ENCODE measurements at regions of chr12 and their contacts with region 1.

Region 1: GRCh38 chr12:93502802-93503623 is 35.7 kb downstream of the MRPL42 start:
- DNase-seq: peak; percentile 53
- H3K4me3 ChIP-seq: no peak overlapping the region
- H3K27ac ChIP-seq: no peak overlapping the region
- H3K4me1 ChIP-seq: no peaks in the 10 kb centered on the region
- CTCF ChIP-seq: peak; percentile 100

Region 2: GRCh38 chr12:93229494-93230325 is 273.3 kb before region 1 on chr12:
- CTCF ChIA-PET with region 1: no interaction called
- POLR2A ChIA-PET with region 1: no interaction called
- intact Hi-C with region 1: no loop called
- DNase-seq: no peak
- H3K4me3 ChIP-seq: no peak overlapping the region
- H3K27ac ChIP-seq: no peak overlapping the region
- H3K4me1 ChIP-seq: no peaks in the 10 kb centered on the region
- CTCF ChIP-seq: no peak

Region 3: GRCh38 chr12:93563807-93564538 is 61.0 kb after region 1 on chr12:
- CTCF ChIA-PET with region 1: no interaction called
- POLR2A ChIA-PET with region 1: interaction called, 3 read pairs
- intact Hi-C with region 1: loop called (anchors 2 kb)
- DNase-seq: peak; percentile 61
- H3K4me3 ChIP-seq: no peak overlapping the region
- H3K27ac ChIP-seq: no peak overlapping the region
- H3K4me1 ChIP-seq: no peaks in the 10 kb centered on the region
- CTCF ChIP-seq: peak; percentile 76

Region 4: GRCh38 chr12:93624595-93625294 is 121.7 kb after region 1 on chr12:
- CTCF ChIA-PET with region 1: no interaction called
- POLR2A ChIA-PET with region 1: no interaction called
- intact Hi-C with region 1: no loop called
- DNase-seq: no peak
- H3K4me3 ChIP-seq: no peak overlapping the region
- H3K27ac ChIP-seq: no peak overlapping the region
- H3K4me1 ChIP-seq: no peaks in the 10 kb centered on the region
- CTCF ChIP-seq: no peak

Region 5: GRCh38 chr12:93699271-93700145 is 196.5 kb after region 1 on chr12:
- CTCF ChIA-PET with region 1: no interaction called
- POLR2A ChIA-PET with region 1: no interaction called
- intact Hi-C with region 1: no loop called
- DNase-seq: no peak
- H3K4me3 ChIP-seq: no peak overlapping the region
- H3K27ac ChIP-seq: no peak overlapping the region
- H3K4me1 ChIP-seq: no peaks in the 10 kb centered on the region
- CTCF ChIP-seq: no peak

Region 6: GRCh38 chr12:93979189-93979588 is 476.2 kb after region 1 on chr12:
- CTCF ChIA-PET with region 1: no interaction called
- POLR2A ChIA-PET with region 1: no interaction called
- intact Hi-C with region 1: loop called (anchors 5 kb)
- DNase-seq: peak; percentile 20
- H3K4me3 ChIP-seq: no peak overlapping the region
- H3K27ac ChIP-seq: no peak overlapping the region
- H3K4me1 ChIP-seq: no peaks in the 10 kb centered on the region
- CTCF ChIP-seq: peak; percentile 70

Region 7: DNA sequence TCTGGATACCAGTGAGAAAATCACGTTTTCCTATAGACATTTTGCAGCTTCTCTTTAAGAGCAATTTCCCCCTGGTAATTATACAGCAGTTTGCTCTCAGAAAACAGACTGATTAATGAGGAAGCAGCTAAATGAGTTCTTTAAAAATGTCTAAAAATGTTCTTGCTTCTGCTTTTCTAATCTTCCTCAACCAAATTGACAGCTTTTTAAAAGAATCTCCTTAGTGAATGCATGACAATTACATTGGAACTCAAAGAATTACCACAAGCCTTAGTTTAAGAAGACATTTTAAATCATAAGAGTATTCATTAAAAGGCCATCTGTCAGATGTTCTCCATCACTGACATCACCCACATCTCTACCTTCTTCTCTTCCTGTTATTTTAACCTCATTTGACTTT is 509.6 kb after region 1 on chr12:
- CTCF ChIA-PET with region 1: no interaction called
- POLR2A ChIA-PET with region 1: no interaction called
- intact Hi-C with region 1: no loop called
- DNase-seq: no peak
- H3K4me3 ChIP-seq: no peak overlapping the region
- H3K27ac ChIP-seq: no peak overlapping the region
- H3K4me1 ChIP-seq: no peaks in the 10 kb centered on the region
- CTCF ChIP-seq: no peak

Region 8: DNA sequence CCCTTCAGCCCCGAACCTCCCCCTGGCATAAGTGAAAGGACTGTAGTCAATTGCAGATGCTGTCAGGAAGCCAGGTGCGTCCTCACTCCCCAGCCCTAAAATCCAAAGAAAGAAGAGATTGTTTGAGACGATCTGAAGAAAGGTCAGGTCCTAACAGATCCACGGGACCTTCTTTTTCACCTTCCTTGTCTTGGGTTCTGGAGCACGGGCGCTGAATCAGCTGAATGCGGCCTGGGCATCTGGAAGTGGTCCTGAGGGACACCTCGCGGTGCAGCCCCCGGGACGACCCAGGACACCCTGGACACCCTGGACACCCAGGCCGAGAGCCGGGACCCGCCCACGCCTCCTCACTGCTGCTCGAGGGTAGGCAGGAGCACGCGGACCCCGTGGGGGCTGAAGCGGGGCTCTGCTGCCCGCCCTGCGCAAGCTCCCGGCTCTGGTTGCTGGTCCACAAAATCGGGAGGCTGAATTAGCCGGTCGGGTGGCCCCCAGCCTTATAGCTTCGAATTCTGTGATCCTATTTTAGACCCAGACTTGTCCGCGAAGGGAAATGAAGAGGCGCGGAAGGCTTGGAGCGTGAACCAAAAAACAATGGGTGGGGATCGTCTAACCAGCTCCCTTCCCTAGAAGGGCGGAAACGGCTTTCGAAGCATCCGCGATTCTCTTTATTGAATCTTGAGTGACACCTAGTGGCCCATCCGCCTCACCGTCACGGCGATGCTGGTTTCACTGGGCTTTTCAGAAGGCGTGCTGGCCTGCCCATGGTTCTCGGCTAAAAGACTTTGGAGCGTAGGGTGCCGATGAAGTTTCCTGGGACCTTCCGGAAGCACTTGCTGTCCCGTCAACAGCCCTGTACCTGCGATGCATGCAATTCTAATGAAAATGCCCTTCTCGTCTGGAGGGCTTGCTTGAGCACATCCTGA is 599.0 kb after region 1 on chr12:
- CTCF ChIA-PET with region 1: no interaction called
- POLR2A ChIA-PET with region 1: interaction called, 5 read pairs
- intact Hi-C with region 1: loop called (anchors 2 kb)
- DNase-seq: peak; percentile 89
- H3K4me3 ChIP-seq: no peak overlapping the region
- H3K27ac ChIP-seq: no peak overlapping the region
- H3K4me1 ChIP-seq: peaks cover 3% of the 10 kb centered on the region
- CTCF ChIP-seq: peak; percentile 87